Activated CD4-positive, alpha-beta T cell treated with anti-CD3 and anti-CD28 coated beads, Interleukin-2, amount 10 ng/mL, durations not matched to agents 24 days and 14 days (primary cell): ENCODE measurements at regions of chr19 and their contacts with region 1.

Region 1: GRCh38 chr19:10502524-10503001 is 593 bp downstream of the KEAP1 start:
- DNase-seq: peak; percentile 98
- H3K4me3 Mint-ChIP-seq: peak overlapping the region; percentile 88
- H3K27ac Mint-ChIP-seq: peak overlapping the region; percentile 86
- H3K4me1 Mint-ChIP-seq: peaks cover 37% of the 10 kb centered on the region
- H3K27me3 Mint-ChIP-seq: no peaks in the 10 kb centered on the region

Region 2: GRCh38 chr19:10424011-10424637 is 78.4 kb before region 1 on chr19:
- intact Hi-C with region 1: loop called (anchors 2 kb)
- DNase-seq: peak; percentile 92
- H3K4me3 Mint-ChIP-seq: peak overlapping the region; percentile 87
- H3K27ac Mint-ChIP-seq: peak overlapping the region; percentile 96
- H3K4me1 Mint-ChIP-seq: peaks cover 74% of the 10 kb centered on the region
- H3K27me3 Mint-ChIP-seq: peaks cover 5% of the 10 kb centered on the region

Region 3: GRCh38 chr19:10625003-10625776 is 122.6 kb after region 1 on chr19 and contains the start of gene SLC44A2:
- intact Hi-C with region 1: no loop called
- DNase-seq: no peak
- H3K4me3 Mint-ChIP-seq: peak within 1 kb of the TSS; percentile 39
- H3K27ac Mint-ChIP-seq: peak within 1 kb of the TSS; percentile 72
- H3K4me1 Mint-ChIP-seq: peaks cover 29% of the 10 kb centered on the region
- H3K27me3 Mint-ChIP-seq: no peaks in the 10 kb centered on the region
- total RNA-seq, gene SLC44A2: 85.5 and 98.6 TPM in 2 replicates

Region 4: DNA sequence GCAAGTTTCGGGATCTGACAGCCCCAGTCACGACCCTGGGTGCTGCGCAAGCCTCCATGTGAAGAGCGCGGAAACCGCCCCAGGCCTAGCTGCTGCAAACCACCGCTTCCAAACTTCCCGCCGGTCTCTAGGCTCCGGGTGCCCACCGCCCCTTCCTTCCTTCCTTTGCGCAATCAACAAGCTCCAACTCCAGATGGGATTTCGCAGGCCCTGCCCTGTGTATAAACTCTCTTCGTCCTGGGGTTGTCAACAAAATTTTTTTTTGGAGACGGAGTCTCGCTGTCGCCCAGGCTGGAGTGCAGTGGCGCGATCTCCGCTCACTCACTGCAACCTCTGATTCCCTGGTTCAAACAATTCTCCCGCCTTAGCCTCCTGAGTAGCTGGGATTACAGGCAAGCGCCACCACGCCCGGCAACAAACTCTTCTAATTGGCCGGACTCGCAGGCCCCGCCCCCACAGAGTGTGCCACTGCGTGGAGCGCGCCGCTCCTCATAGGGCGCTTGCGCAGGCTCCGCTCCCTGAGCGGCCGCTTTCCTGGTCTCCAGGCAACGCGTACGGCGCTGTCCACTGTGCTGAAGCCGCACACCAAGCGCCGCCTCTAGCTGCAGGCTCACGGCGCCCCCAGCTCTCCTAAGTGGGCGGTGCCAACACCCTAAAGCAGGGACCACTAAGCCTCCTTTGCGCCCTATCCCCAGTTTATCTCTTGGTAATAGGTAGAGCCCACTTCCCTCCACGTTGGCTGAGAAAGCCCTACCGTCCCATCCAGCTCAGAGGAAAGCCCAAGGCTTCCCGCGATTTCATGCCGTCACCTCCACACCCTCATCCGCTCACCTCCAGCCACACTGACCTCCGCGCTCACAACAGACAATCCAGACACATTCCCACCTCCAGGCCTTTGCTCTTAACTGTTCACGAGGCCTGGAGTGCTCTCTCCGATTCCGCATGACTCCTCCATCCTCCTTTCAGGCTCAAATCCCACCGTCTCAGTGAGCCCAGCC is 193.1 kb after region 1 on chr19:
- intact Hi-C with region 1: loop called (anchors 5 kb)
- DNase-seq: peak; percentile 98
- H3K4me3 Mint-ChIP-seq: peak overlapping the region; percentile 85
- H3K27ac Mint-ChIP-seq: peak overlapping the region; percentile 75
- H3K4me1 Mint-ChIP-seq: peaks cover 18% of the 10 kb centered on the region
- H3K27me3 Mint-ChIP-seq: peaks cover 6% of the 10 kb centered on the region

Region 5: DNA sequence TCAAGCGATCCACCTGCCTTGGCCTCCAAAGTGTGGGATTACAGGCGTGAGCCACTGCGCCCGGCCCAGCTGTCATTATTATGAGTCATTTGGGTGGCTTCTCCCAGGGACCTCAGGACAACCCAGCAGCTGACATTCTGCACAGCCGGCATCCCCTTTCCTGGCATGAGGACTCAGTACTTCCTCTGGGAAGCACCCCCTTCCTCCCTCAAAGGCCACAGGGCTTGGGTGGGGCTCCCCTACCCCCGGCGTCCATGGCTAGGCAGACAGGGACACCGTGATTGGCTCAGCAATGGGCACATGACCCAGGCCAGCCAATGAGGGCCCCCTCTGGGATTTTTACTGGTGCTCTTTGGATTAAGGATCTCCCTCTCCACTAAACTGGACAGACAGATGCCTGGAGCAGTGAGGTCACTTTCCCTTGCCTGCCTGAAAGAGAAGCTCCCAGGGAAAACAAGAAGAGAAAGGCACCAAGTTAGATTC is 688.8 kb after region 1 on chr19:
- intact Hi-C with region 1: no loop called
- DNase-seq: no peak
- H3K4me3 Mint-ChIP-seq: no peak overlapping the region
- H3K27ac Mint-ChIP-seq: no peak overlapping the region
- H3K4me1 Mint-ChIP-seq: peaks cover 2% of the 10 kb centered on the region
- H3K27me3 Mint-ChIP-seq: peaks cover 8% of the 10 kb centered on the region